ENCODE measurements at regions of chr17 and their contacts with region 1.

Region 1: DNA sequence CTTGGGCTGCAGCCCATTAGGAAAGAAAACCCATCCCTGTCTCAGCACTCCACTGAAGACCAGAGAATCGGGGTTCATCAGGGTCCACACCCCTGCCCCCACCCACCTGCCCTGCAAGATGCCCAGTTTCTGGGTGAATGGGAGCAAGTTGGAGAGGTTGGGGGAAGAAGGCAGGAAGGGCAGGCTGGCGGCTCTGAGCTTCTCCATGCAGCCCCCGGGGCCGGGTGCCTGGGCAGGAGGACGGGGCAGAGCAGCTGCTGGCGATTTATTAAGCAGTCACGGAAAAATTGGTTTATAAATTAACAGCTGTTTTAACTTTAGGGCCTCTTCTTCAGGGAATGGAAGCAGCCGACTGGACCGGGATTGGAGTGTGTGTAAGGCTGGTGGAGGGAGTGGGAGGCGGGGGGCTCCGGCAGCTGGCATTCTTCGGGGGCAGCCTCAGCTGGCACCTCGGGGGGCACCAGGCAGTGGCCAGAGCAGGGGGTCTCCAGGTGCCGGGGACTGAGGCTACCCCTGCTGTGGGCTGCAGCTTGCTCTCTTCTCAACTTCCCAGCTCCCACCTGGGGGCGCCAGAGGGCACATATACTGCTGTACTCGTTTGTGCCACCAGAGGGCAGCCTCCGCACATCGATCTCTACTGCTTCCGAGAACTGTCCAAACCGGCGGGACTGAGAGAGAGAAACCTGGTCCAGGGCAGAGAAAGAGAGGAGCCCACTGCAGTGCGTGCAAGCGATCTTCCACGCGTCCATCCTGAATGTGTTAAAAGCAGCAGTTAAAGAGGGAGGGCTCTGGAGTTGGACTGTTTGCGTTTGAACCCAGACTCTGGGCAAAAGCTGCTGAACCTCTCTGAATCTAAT is 5.0 kb upstream of the PPP1R1B start:
- DNase-seq: peak; percentile 100
- H3K4me3 Mint-ChIP-seq: peak overlapping the region; percentile 18
- H3K27ac Mint-ChIP-seq: peak overlapping the region; percentile 3
- H3K4me1 Mint-ChIP-seq: peaks cover 55% of the 10 kb centered on the region
- H3K27me3 Mint-ChIP-seq: peaks cover 83% of the 10 kb centered on the region
- CTCF ChIP-seq: no peak

Region 2: DNA sequence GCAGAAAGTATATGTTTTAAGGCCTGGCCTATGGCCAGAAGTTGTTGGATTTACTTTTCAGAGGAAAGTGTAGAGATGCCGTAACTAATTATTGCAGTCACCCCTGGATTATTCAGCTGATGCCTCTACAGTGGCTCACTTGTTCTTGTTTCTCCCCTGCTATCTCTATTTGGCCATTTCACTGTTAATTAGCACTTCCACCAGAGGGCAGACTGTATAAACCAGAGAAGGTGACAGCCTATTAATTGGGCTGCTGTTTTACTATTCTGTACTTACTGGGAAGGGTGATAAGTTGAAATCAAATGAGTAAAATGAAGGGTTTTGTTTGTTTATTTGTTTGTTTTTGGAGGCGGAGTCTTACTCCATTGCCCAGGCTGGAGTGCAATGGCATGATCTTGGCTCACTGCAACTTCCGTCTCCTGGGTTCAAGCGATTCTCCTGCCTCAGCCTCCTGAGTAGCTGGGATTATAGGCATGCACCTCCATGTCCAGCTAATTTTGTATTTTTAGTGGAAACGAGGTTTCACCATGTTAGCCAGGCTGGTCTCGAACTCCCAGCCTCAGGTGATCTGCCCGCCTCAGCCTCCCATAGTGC is 94.4 kb before region 1 on chr17:
- CTCF ChIA-PET with region 1: interaction called, 16 read pairs
- intact Hi-C with region 1: loop called (anchors 1 kb)
- DNase-seq: peak; percentile 72
- H3K4me3 Mint-ChIP-seq: no peak overlapping the region
- H3K27ac Mint-ChIP-seq: no peak overlapping the region
- H3K4me1 Mint-ChIP-seq: no peaks in the 10 kb centered on the region
- H3K27me3 Mint-ChIP-seq: no peaks in the 10 kb centered on the region
- CTCF ChIP-seq: peak; percentile 97

Region 3: DNA sequence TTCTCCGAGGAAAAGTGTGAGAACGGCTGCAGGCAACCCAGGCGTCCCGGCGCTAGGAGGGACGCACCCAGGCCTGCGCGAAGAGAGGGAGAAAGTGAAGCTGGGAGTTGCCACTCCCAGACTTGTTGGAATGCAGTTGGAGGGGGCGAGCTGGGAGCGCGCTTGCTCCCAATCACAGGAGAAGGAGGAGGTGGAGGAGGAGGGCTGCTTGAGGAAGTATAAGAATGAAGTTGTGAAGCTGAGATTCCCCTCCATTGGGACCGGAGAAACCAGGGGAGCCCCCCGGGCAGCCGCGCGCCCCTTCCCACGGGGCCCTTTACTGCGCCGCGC is 78.0 kb after region 1 on chr17 and contains the start of gene ERBB2:
- CTCF ChIA-PET with region 1: interaction called, 42,089 read pairs
- intact Hi-C with region 1: loop called (anchors 2 kb)
- DNase-seq: peak; percentile 100
- H3K4me3 Mint-ChIP-seq: peak within 1 kb of the TSS; percentile 71
- H3K27ac Mint-ChIP-seq: peak within 1 kb of the TSS; percentile 67
- H3K4me1 Mint-ChIP-seq: peaks cover 68% of the 10 kb centered on the region
- H3K27me3 Mint-ChIP-seq: no peaks in the 10 kb centered on the region
- CTCF ChIP-seq: no peak
- total RNA-seq, gene ERBB2: 4,829 and 4,830 TPM in 2 replicates

Region 4: GRCh38 chr17:39800540-39800939 is 178.8 kb after region 1 on chr17:
- CTCF ChIA-PET with region 1: interaction called, 357 read pairs
- intact Hi-C with region 1: no loop called
- DNase-seq: peak; percentile 85
- H3K4me3 Mint-ChIP-seq: no peak overlapping the region
- H3K27ac Mint-ChIP-seq: no peak overlapping the region
- H3K4me1 Mint-ChIP-seq: peaks cover 17% of the 10 kb centered on the region
- H3K27me3 Mint-ChIP-seq: no peaks in the 10 kb centered on the region
- CTCF ChIP-seq: no peak

Region 5: GRCh38 chr17:39889200-39889599 is 267.4 kb after region 1 on chr17:
- CTCF ChIA-PET with region 1: interaction called, 4,313 read pairs
- intact Hi-C with region 1: loop called (anchors 1 kb)
- DNase-seq: peak; percentile 82
- H3K4me3 Mint-ChIP-seq: no peak overlapping the region
- H3K27ac Mint-ChIP-seq: no peak overlapping the region
- H3K4me1 Mint-ChIP-seq: peaks cover 26% of the 10 kb centered on the region
- H3K27me3 Mint-ChIP-seq: peaks cover 22% of the 10 kb centered on the region
- CTCF ChIP-seq: no peak

Region 6: DNA sequence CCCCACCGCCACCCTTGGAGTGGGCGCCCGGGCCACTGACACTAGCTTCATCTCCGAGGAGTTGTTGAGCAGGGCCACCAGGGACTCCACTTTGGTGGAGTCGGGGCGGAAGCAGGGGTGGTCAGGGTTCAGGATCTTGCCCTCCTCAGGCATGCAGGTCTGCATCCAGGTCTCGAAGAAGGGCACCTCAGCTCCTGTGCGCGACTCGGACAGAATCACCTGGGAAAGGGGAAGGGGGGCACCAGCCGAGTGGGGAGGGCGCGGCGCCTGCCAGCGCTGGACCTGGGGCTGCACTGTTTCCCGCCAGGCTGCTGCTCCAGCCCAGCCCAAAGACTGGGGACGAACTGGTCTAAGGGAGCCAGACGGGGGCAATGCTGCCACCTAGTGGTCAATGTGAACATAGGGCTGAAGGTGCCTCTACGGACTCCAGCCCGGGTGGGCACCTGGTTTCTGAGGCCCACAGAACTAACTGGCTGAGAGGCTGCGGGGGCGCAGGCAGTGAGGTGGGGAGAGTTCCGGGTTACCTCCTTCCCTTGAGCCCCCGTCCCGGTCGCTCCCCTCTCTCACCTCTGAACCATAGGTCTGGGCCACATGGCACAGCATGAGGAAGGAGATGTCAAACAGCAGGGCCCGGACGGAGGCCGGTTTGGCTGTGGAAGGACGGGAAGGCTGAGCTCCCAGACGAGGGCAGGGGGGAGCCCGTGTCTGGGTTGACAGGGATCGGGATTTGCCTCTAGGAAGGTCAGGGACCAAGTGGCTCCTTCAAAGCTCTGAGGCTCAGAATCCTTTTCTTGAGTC is 405.3 kb after region 1 on chr17:
- CTCF ChIA-PET with region 1: interaction called, 23 read pairs
- intact Hi-C with region 1: loop called (anchors 1 kb)
- DNase-seq: peak; percentile 100
- H3K4me3 Mint-ChIP-seq: no peak overlapping the region
- H3K27ac Mint-ChIP-seq: no peak overlapping the region
- H3K4me1 Mint-ChIP-seq: peaks cover 30% of the 10 kb centered on the region
- H3K27me3 Mint-ChIP-seq: no peaks in the 10 kb centered on the region
- CTCF ChIP-seq: no peak

Region 7: GRCh38 chr17:40615295-40615988 is 993.7 kb after region 1 on chr17:
- CTCF ChIA-PET with region 1: interaction called, 18 read pairs
- intact Hi-C with region 1: no loop called
- DNase-seq: peak; percentile 100
- H3K4me3 Mint-ChIP-seq: no peak overlapping the region
- H3K27ac Mint-ChIP-seq: no peak overlapping the region
- H3K4me1 Mint-ChIP-seq: peaks cover 26% of the 10 kb centered on the region
- H3K27me3 Mint-ChIP-seq: peaks cover 97% of the 10 kb centered on the region
- CTCF ChIP-seq: no peak